ENCODE measurements at regions of chr15 and their contacts with region 1.

Region 1: GRCh38 chr15:89647191-89647851 is 7.9 kb downstream of the KIF7 start:
- DNase-seq: peak; percentile 49 to 64 (median 58)
- H3K4me3 ChIP-seq: no peak overlapping the region
- H3K27ac ChIP-seq: no peak overlapping the region
- H3K4me1 ChIP-seq: peaks cover 0 to 2% (median 0%) of the 10 kb centered on the region in 4 experiments
- H3K27me3 ChIP-seq: no peaks in the 10 kb centered on the region

Region 2: DNA sequence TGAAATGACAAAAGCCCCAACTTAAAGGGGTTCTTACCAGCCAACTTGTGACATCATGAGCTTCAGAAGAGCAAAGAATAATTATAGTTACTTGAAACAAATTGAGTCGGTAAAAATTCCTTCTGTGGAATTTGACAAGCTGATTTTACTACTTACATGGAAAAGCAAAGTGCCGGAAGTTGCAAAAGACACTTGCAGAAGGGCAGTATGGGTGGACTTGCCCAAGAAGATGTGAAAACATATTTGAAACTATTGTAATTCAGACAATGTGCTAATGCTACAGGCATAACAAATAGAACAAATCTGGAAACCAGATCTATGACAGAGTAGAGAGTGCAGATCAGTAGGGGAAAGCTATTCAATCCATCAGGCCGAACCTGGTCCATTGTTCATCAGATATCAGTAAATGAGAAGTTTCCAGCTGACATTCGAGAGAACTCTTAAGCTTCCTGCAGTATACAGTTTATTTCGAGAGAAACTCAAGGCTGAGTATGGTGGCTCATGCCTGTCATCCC is 10.4 kb after region 1 on chr15:
- CTCF ChIA-PET with region 1: interaction called, 19 read pairs
- POLR2A ChIA-PET with region 1: no interaction called
- DNase-seq: no peak
- H3K4me3 ChIP-seq: no peak overlapping the region
- H3K27ac ChIP-seq: no peak overlapping the region
- H3K4me1 ChIP-seq: peaks cover 4 to 29% (median 21%) of the 10 kb centered on the region in 4 experiments
- H3K27me3 ChIP-seq: peaks cover 0 to 6% (median 0%) of the 10 kb centered on the region in 5 experiments

Region 3: DNA sequence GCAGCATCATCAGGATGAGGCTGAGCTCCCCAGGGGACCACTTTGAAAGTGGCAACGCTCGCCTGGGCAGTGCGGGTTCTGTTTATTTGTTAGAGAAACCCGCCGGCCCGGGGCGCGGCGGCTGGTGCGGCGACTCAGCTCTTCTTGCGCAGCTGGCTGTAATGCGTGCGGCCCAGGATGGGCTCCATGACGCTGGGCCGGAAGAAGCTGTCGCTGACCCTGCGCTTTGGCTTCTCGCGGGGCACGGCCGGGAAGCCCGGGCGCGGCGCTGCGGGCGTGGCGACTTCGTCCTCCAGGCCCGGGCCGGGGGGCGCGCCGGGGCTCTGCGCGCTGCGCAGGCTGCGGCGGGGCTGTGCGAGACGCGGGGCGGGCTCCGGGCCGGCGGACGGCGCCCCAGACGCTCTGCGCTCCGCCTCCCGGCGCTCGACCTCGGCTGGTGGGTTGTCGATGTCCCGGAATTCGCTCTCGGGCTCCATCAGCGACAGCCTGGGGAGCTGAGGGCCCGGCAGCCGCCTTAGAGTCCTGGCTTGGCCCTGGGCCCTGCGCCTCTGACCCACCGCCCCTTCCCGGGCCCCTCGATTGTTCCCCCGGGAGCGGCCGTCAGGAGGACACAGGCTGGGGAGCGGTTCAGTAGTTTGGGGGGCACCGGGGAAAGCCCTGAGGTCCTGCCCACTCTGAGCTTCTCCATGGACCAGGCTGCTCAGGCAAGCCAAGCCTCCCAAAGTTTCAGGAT is 18.3 kb after region 1 on chr15:
- CTCF ChIA-PET with region 1: interaction called, 19 read pairs
- POLR2A ChIA-PET with region 1: no interaction called
- DNase-seq: peak; percentile 33 to 60 (median 43)
- H3K4me3 ChIP-seq: peak overlapping the region; percentile 28 to 74 (median 57)
- H3K27ac ChIP-seq: no peak overlapping the region
- H3K4me1 ChIP-seq: peaks cover 0 to 23% (median 20%) of the 10 kb centered on the region in 4 experiments
- H3K27me3 ChIP-seq: peaks cover 0 to 7% (median 0%) of the 10 kb centered on the region in 5 experiments